Activated B cell treated with CpG ODN at 0.5 μM for 24 hours (primary cell): ENCODE measurements at regions of chr5 and their contacts with region 1.

Region 1: DNA sequence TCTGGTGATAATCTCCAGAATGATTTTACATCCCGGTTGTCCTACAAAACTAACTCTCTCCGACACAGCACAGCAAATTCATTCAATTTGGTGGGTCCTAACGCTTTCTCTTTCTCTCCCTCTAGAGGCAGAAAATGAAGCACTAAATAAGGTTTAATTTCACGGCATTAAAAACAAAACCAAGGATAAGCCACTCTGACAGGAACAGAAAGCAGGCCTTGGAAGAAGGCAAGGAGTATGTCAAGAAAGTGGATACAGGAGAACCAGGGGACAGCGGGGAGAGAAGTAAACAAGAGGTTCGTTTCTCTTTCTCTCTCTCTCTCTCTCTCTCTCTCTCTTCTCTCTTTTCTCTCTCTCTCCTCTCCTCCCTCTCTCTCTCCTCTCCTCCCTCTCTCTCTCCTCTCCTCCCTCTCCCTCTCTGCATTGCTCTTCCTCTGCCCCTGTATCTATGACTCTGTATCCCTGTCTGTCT is 49.8 kb downstream of the EBF1 start:
- DNase-seq: no peak
- ATAC-seq: no peak
- H3K4me3 Mint-ChIP-seq: peak overlapping the region; percentile 76
- H3K27ac Mint-ChIP-seq: peak overlapping the region; percentile 93
- H3K4me1 Mint-ChIP-seq: peaks cover 97% of the 10 kb centered on the region
- H3K27me3 Mint-ChIP-seq: no peaks in the 10 kb centered on the region
- CTCF ChIP-seq: no peak

Region 2: DNA sequence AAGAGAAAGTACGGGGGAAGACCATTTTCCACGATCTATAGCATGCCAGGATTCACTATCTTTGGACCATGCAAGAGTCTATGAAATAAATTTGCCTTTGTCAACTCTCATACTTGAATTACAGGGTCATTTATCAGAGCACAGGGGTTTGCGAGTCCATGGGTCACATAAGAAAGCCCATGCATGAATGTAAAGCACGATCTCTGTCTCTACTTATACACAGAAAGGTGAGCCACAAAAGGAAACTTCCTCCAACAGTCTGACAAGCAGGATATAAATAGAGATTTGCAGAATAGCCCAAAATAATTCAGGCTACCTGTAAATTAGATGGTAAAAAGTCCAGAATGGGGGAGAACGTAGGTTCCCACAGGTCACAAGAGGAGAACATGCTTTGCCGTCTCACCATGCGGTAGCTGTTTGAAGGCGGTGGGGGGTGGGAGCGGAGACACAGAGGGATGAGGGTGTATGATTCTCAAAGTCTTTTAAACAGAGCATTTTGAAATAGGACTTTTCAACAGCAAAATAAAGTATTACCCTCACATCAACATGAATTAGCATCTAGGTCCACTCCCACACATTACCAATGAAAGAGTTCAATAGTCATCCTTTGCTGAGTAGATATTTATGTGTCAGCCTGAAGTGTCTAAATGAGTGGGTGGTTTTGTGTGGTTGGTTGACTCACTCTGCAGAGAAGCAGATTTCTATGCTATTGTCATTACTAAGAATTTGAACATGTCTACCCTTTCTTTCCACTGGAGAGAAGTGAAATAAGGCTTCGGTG is 229.8 kb before region 1 on chr5:
- CTCF ChIA-PET with region 1: no interaction called
- POLR2A ChIA-PET with region 1: interaction called, 4 read pairs
- intact Hi-C with region 1: loop called (anchors 2 kb)
- DNase-seq: no peak
- ATAC-seq: peak; percentile 76
- H3K4me3 Mint-ChIP-seq: peak overlapping the region; percentile 75
- H3K27ac Mint-ChIP-seq: peak overlapping the region; percentile 95
- H3K4me1 Mint-ChIP-seq: peaks cover 99% of the 10 kb centered on the region
- H3K27me3 Mint-ChIP-seq: no peaks in the 10 kb centered on the region
- CTCF ChIP-seq: no peak

Region 3: GRCh38 chr5:159010661-159011442 is 39.0 kb before region 1 on chr5:
- CTCF ChIA-PET with region 1: no interaction called
- POLR2A ChIA-PET with region 1: interaction called, 12 read pairs
- intact Hi-C with region 1: loop called (anchors 2 kb)
- DNase-seq: no peak
- ATAC-seq: peak; percentile 82
- H3K4me3 Mint-ChIP-seq: peak overlapping the region; percentile 78
- H3K27ac Mint-ChIP-seq: peak overlapping the region; percentile 91
- H3K4me1 Mint-ChIP-seq: peaks cover 91% of the 10 kb centered on the region
- H3K27me3 Mint-ChIP-seq: no peaks in the 10 kb centered on the region
- CTCF ChIP-seq: no peak

Region 4: GRCh38 chr5:159061179-159061796 is 11.4 kb after region 1 on chr5:
- CTCF ChIA-PET with region 1: no interaction called
- POLR2A ChIA-PET with region 1: interaction called, 21 read pairs
- intact Hi-C with region 1: loop called (anchors 1 kb)
- DNase-seq: no peak
- ATAC-seq: no peak
- H3K4me3 Mint-ChIP-seq: no peak overlapping the region
- H3K27ac Mint-ChIP-seq: no peak overlapping the region
- H3K4me1 Mint-ChIP-seq: peaks cover 69% of the 10 kb centered on the region
- H3K27me3 Mint-ChIP-seq: no peaks in the 10 kb centered on the region
- CTCF ChIP-seq: no peak

Region 5: GRCh38 chr5:159094745-159095144 is 44.9 kb after region 1 on chr5:
- CTCF ChIA-PET with region 1: interaction called, 3 read pairs
- POLR2A ChIA-PET with region 1: interaction called, 136 read pairs
- intact Hi-C with region 1: no loop called
- DNase-seq: peak; percentile 44
- ATAC-seq: no peak
- H3K4me3 Mint-ChIP-seq: peak overlapping the region; percentile 99
- H3K27ac Mint-ChIP-seq: peak overlapping the region; percentile 67
- H3K4me1 Mint-ChIP-seq: peaks cover 70% of the 10 kb centered on the region
- H3K27me3 Mint-ChIP-seq: no peaks in the 10 kb centered on the region
- CTCF ChIP-seq: no peak